OCI-LY7 (cell line): ENCODE measurements at regions of chr2 and their contacts with region 1.

Region 1: GRCh38 chr2:136135921-136136906 is 18.3 kb upstream of the CXCR4 start:
- DNase-seq: peak; percentile 93
- H3K4me3 ChIP-seq: peak overlapping the region; percentile 31
- H3K27ac ChIP-seq: peak overlapping the region; percentile 98
- H3K4me1 ChIP-seq: peaks cover 98% of the 10 kb centered on the region
- CTCF ChIP-seq: no peak

Region 2: DNA sequence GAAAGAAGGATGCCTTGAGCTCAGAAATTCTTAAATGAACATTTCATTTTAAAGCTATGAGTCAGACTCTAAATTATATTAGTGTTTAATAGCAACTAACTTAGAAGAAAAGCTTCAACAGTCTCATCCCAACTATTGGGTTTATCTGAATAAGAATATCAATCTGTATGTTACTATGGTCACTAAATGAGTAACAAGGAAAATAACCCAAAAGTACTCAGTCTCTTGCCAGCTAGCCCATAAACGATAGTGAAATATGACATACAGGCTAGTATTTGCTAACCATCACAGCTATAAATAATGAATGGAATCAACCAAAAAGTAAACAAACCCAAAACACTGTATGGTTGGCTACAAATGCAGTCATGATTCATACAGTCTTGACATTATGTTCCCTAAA is 909.3 kb before region 1 on chr2:
- CTCF ChIA-PET with region 1: no interaction called
- POLR2A ChIA-PET with region 1: no interaction called
- intact Hi-C with region 1: no loop called
- DNase-seq: no peak
- H3K4me3 ChIP-seq: no peak overlapping the region
- H3K27ac ChIP-seq: no peak overlapping the region
- H3K4me1 ChIP-seq: no peaks in the 10 kb centered on the region
- CTCF ChIP-seq: no peak

Region 3: DNA sequence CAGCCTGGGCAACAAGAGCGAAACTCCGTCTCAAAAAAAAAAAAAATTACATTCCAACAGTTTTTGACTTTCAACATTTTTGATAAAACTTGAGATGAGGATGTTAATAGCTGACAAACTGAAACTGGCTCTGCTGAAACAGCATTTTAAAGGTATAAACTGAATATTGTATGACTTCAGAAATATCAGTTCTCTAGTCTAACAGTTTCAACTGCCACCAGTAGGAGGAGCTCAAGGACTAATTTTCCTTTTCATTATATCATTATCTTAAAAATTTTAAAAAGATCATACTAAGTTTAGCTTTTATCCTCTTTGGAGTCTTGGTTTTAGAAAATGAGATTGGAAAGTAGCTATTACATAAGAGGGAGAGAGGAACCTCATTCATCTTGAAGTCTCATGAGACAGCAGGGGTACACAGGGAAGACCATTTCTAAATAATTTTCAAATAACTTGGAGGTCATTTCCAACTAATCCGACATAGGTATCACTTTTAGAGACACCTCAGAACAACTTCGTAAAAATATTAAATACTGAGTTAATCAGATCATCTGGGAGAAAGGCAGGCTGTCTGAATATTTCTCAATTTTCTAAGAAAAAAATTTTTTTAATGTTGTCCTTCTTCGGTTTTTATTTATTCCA is 222.4 kb before region 1 on chr2:
- CTCF ChIA-PET with region 1: no interaction called
- POLR2A ChIA-PET with region 1: interaction called, 4 read pairs
- intact Hi-C with region 1: loop called (anchors 5 kb)
- DNase-seq: peak; percentile 73
- H3K4me3 ChIP-seq: no peak overlapping the region
- H3K27ac ChIP-seq: peak overlapping the region; percentile 5
- H3K4me1 ChIP-seq: peaks cover 27% of the 10 kb centered on the region
- CTCF ChIP-seq: peak; percentile 96

Region 4: DNA sequence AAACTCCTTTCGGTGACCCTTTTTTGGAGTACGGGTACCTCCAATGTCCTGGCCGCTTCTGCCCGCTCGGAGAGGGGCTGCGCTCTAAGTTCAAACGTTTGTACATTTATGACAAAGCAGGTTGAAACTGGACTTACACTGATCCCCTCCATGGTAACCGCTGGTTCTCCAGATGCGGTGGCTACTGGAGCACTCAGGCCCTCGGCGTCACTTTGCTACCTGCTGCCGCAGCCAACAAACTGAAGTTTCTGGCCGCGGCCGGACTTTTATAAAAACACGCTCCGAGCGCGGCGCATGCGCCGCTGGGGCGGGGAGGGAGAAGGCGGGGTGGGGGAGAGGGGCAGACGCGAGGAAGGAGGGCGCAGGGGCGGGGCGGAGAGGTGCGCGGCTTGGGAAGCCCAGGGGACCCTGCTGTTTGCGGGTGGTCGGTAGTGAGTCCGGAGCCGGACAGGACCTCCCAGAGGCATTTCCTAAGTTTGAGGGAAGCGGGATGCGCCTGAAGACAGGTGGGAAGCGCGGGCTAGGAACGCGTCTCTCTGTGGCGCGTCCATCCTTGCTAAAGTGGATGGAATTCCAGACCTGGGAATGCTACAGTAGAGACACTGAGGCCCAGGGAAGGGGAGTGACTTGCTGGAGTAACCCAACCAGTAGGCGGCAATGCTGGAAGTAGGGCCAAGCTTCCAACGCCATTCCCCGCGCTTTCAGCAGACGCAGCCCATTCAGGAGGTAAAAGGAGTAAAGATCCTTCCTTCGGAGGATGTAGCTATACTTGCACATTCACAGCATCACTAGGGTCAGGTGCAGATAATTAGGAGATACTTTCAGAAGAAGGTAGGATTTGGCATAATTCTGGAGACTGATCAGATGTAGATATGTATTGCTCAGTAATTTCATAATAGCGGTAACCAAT is 18.1 kb before region 1 on chr2 and contains the start of gene CXCR4:
- CTCF ChIA-PET with region 1: no interaction called
- POLR2A ChIA-PET with region 1: interaction called, 34 read pairs
- intact Hi-C with region 1: loop called (anchors 1 kb)
- DNase-seq: peak; percentile 89
- H3K4me3 ChIP-seq: peak within 1 kb of the TSS; percentile 92
- H3K27ac ChIP-seq: peak within 1 kb of the TSS; percentile 92
- H3K4me1 ChIP-seq: peaks cover 66% of the 10 kb centered on the region
- CTCF ChIP-seq: peak; percentile 33; the same call in 1 of the 2 replicates
- total RNA-seq, gene CXCR4: 367 and 432 TPM in 2 replicates

Region 5: DNA sequence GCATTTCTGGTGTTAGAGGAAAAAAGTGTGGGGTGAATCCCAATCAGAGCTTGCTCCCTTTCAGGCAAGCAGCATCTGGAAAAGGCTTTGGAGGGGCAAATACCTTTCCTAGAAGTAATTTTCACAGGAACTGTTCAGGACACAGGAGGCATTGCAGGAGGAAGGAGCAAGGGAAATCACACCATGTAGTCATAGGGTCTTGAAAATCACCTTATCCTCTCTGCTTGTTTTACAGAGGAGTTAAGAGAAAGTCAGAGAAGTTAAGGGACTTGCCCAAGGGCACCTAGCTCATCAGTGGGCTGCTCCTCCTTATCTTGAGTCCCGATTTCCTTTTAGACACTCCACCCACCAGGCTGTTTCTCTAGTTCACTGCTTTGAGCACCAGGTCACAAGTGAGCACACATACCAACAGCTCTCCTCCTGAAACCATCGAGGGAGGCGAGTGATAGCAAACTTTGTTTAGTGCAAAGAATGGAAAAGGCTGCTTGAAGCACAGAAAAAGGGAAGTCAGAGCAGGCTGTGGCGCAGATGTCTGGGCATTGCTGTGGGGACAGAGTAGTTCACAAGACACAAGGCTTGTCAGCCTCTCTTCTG is 70.9 kb after region 1 on chr2:
- CTCF ChIA-PET with region 1: interaction called, 14 read pairs
- POLR2A ChIA-PET with region 1: interaction called, 53 read pairs
- intact Hi-C with region 1: loop called (anchors 1 kb)
- DNase-seq: peak; percentile 96
- H3K4me3 ChIP-seq: peak overlapping the region; percentile 58
- H3K27ac ChIP-seq: peak overlapping the region; percentile 97
- H3K4me1 ChIP-seq: peaks cover 66% of the 10 kb centered on the region
- CTCF ChIP-seq: peak; percentile 11; the same call in 1 of the 2 replicates

Region 6: DNA sequence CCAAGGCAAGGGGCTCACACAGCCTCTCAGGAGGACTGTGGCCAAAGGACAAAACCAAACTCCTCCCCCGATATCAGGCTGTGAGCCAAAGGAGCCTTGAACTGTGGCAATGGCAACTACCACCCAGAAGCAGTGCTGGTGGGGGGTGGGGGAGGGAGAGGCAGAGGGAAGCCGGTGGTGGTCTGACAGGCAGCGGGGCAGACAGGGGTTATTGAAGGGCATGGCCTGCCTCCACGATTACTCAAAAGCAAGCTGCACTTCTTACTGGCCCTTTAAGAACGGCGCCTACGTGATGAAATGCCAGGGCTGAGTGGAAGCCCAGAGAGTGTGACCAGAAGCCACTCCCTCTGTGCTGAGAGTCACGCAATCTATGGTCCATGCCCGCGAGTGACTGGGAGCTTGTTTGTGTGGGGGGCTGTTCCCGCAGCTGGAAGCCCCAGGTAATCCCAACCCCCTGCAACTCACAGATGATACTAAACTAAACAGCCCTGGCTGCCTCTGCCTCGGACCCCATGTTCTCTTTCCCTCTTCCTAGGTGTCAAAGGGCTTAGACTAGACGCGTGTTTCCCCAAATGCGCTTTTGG is 110.0 kb after region 1 on chr2:
- CTCF ChIA-PET with region 1: interaction called, 3 read pairs
- POLR2A ChIA-PET with region 1: interaction called, 191 read pairs
- intact Hi-C with region 1: no loop called
- DNase-seq: peak; percentile 72
- H3K4me3 ChIP-seq: peak overlapping the region; percentile 15
- H3K27ac ChIP-seq: peak overlapping the region; percentile 44
- H3K4me1 ChIP-seq: peaks cover 69% of the 10 kb centered on the region
- CTCF ChIP-seq: no peak

Region 7: DNA sequence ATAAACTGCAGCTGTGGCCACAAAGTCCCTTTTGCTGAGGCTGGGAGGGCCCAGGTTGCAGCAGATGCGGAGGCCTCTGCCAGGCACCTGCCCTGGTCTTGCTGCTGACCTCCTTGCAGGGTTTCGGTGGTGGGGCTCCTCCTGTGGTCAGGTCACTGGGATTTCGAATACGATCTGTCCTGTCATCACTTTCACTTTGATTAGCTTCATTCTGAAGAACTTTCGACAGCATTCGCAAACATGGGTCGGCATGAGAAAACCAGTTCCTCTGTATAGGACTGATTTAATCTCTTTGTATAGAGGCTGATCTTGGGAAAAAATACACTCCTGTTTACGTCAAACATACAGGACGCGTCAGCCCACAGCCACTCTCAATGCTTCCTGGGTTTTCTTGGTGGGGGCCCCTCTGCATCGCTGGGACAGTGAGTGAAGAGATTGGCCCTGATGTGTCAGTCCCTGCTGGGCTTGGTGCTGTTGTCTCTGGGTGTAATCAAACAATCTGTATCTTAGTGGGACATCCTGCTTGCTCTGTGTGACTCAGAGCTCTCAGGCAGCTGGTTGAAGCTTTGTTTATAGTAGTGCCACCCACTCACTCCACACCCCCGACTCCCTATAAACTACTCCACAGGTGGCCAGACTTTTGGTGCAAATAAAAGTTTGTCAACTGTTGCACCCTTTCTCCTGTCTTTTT is 191.1 kb after region 1 on chr2:
- CTCF ChIA-PET with region 1: no interaction called
- POLR2A ChIA-PET with region 1: interaction called, 4 read pairs
- intact Hi-C with region 1: loop called (anchors 1 kb)
- DNase-seq: peak; percentile 78
- H3K4me3 ChIP-seq: peak overlapping the region; percentile 63
- H3K27ac ChIP-seq: peak overlapping the region; percentile 81
- H3K4me1 ChIP-seq: peaks cover 74% of the 10 kb centered on the region
- CTCF ChIP-seq: no peak; the same call in 1 of the 2 replicates

Region 8: GRCh38 chr2:136384531-136385303 is 248.5 kb after region 1 on chr2:
- CTCF ChIA-PET with region 1: interaction called, 13 read pairs
- POLR2A ChIA-PET with region 1: interaction called, 21 read pairs
- intact Hi-C with region 1: loop called (anchors 1 kb)
- DNase-seq: peak; percentile 87
- H3K4me3 ChIP-seq: peak overlapping the region; percentile 19
- H3K27ac ChIP-seq: peak overlapping the region; percentile 93
- H3K4me1 ChIP-seq: peaks cover 87% of the 10 kb centered on the region
- CTCF ChIP-seq: peak; percentile 99